ENCODE measurements at regions of chr15 and their contacts with region 1.

Region 1: GRCh38 chr15:77179541-77179998 is 108.7 kb upstream of the TSPAN3 start:
- DNase-seq: no peak
- ATAC-seq: no peak
- H3K4me3 ChIP-seq: no peak overlapping the region
- H3K27ac ChIP-seq: no peak overlapping the region
- H3K4me1 ChIP-seq: peaks cover 6% of the 10 kb centered on the region
- H3K27me3 ChIP-seq: no peaks in the 10 kb centered on the region
- CTCF ChIP-seq: no peak
- POLR2A ChIP-seq: no peak
- RAD21 ChIP-seq: no peak

Region 2: DNA sequence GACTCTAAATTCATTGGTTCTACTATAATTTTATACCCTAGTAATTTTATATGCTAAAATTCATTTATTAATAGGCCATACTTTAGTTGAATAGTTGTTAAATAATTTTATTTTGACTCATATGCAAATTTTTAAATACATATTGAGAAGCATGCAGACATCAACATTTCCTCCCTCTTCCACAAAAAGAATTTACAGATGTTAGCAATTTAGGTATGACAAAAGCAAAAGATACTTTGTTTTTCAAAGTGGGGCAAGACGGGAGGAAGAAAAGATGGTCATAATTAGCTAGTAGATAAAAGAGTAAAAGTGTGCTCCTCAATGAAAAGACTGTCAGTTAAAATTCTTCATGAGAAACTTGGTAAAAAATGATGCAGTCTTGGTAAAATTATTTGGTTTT is 40.3 kb after region 1 on chr15:
- CTCF ChIA-PET with region 1: no interaction called
- POLR2A ChIA-PET with region 1: interaction called, 14 read pairs
- dilution Hi-C with region 1: no loop called
- in situ Hi-C with region 1: no loop called
- intact Hi-C with region 1: no loop called
- DNase-seq: no peak
- ATAC-seq: no peak
- H3K4me3 ChIP-seq: no peak overlapping the region
- H3K27ac ChIP-seq: no peak overlapping the region
- H3K4me1 ChIP-seq: peaks cover 5% of the 10 kb centered on the region; the same call in 1 of the 2 replicates
- H3K27me3 ChIP-seq: no peaks in the 10 kb centered on the region
- CTCF ChIP-seq: no peak
- POLR2A ChIP-seq: no peak
- RAD21 ChIP-seq: no peak